HepG2 (cell line): ENCODE measurements at regions of chr7 and their contacts with region 1.

Region 1: DNA sequence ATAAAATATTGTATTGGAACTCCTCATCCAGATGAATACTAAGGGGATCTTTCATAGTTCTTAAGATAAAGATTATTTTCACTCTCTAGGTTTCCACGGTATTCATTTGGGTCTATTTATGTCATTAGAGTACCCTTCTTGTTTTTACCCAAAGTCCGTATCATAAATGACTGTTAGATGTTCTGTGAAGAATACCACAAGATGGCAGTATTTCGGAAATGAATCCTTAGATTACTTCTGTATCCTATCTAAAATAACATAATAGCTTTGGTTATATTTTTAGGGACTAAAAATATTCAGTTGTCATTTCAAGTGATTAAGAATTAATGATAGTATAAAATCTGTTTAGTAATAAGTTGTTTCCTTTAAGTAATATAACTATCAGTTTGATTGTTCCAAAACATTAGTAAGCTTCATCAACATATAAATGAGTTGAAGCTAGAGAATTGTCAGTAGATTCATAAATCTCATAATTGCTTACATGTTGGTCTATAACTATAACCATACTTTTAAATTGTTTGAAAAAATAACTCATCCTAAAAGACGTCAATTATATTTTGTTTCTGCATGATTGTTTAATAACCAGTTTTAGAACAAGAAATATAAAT is 337.5 kb upstream of the KCND2 start:
- DNase-seq: peak; percentile 21
- ATAC-seq: peak; percentile 49; the same call in 1 of the 3 replicates
- H3K4me3 ChIP-seq: no peak overlapping the region
- H3K27ac ChIP-seq: no peak overlapping the region
- H3K4me1 ChIP-seq: no peaks in the 10 kb centered on the region
- H3K27me3 ChIP-seq: no peaks in the 10 kb centered on the region
- CTCF ChIP-seq: peak; percentile 32
- EP300 ChIP-seq: no peak
- POLR2A ChIP-seq: no peak
- RAD21 ChIP-seq: no peak

Region 2: GRCh38 chr7:120089968-120090367 is 154.4 kb after region 1 on chr7:
- CTCF ChIA-PET with region 1: no interaction called
- POLR2A ChIA-PET with region 1: no interaction called
- in situ Hi-C with region 1: no loop called
- intact Hi-C with region 1: loop called (anchors 1 kb)
- DNase-seq: peak; percentile 9
- ATAC-seq: peak; percentile 87
- H3K4me3 ChIP-seq: no peak overlapping the region
- H3K27ac ChIP-seq: no peak overlapping the region
- H3K4me1 ChIP-seq: no peaks in the 10 kb centered on the region
- H3K27me3 ChIP-seq: no peaks in the 10 kb centered on the region
- CTCF ChIP-seq: peak; percentile 45
- EP300 ChIP-seq: no peak
- POLR2A ChIP-seq: no peak
- RAD21 ChIP-seq: no peak

Region 3: DNA sequence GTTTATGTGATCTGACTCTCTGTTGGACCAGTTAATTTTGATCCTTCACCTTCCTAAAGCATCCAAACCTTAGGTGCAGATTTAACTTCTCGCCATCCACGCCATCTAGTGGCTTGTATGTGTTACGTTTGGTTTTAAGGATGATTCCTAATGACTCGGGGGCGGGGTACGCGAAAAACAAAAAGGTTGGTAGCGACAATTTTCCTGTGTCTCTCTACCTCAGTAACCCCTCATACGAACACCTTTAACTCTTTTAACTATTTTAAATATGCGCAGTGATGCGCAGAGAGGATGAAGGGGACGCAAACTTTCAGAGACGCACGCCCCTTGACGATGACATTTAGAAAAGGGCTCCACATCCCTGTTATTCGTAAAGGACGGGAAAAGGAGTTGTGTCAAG is 336.7 kb after region 1 on chr7:
- CTCF ChIA-PET with region 1: no interaction called
- POLR2A ChIA-PET with region 1: no interaction called
- in situ Hi-C with region 1: loop called (anchors 5 kb)
- intact Hi-C with region 1: no loop called
- DNase-seq: peak; percentile 22
- ATAC-seq: peak; percentile 79
- H3K4me3 ChIP-seq: no peak overlapping the region
- H3K27ac ChIP-seq: no peak overlapping the region
- H3K4me1 ChIP-seq: no peaks in the 10 kb centered on the region
- H3K27me3 ChIP-seq: peaks cover 0 to 21% of the 10 kb centered on the region in 2 experiments; a peak in 3 of 5 replicates
- CTCF ChIP-seq: peak; percentile 76
- EP300 ChIP-seq: no peak
- POLR2A ChIP-seq: no peak
- RAD21 ChIP-seq: no peak

Region 4: GRCh38 chr7:120554960-120555571 is 619.5 kb after region 1 on chr7:
- CTCF ChIA-PET with region 1: interaction called, 11 read pairs
- POLR2A ChIA-PET with region 1: no interaction called
- in situ Hi-C with region 1: loop called (anchors 10 kb)
- intact Hi-C with region 1: no loop called
- DNase-seq: peak; percentile 49
- ATAC-seq: peak; percentile 96
- H3K4me3 ChIP-seq: no peak overlapping the region
- H3K27ac ChIP-seq: no peak overlapping the region
- H3K4me1 ChIP-seq: no peaks in the 10 kb centered on the region
- H3K27me3 ChIP-seq: no peaks in the 10 kb centered on the region
- CTCF ChIP-seq: peak; percentile 65
- EP300 ChIP-seq: no peak
- POLR2A ChIP-seq: no peak
- RAD21 ChIP-seq: no peak; the same call in 1 of the 2 replicates

Region 5: GRCh38 chr7:120725376-120726039 is 790.0 kb after region 1 on chr7:
- CTCF ChIA-PET with region 1: no interaction called
- POLR2A ChIA-PET with region 1: no interaction called
- in situ Hi-C with region 1: no loop called
- intact Hi-C with region 1: loop called (anchors 5 kb)
- DNase-seq: peak; percentile 16
- ATAC-seq: no peak
- H3K4me3 ChIP-seq: no peak overlapping the region
- H3K27ac ChIP-seq: no peak overlapping the region
- H3K4me1 ChIP-seq: no peaks in the 10 kb centered on the region
- H3K27me3 ChIP-seq: no peaks in the 10 kb centered on the region
- CTCF ChIP-seq: peak; percentile 35
- EP300 ChIP-seq: no peak
- POLR2A ChIP-seq: no peak
- RAD21 ChIP-seq: no peak